CD8-positive, alpha-beta T cell (primary cell): ENCODE measurements at regions of chr1 and their contacts with region 1.

Region 1: GRCh38 chr1:107829061-107830040 is 135.6 kb downstream of the VAV3 start:
- DNase-seq: peak in 2 of 9 experiments; percentile 59 to 72
- ATAC-seq: peak; percentile 76
- H3K4me3 ChIP-seq: no peak overlapping the region
- H3K4me3 Mint-ChIP-seq: peak overlapping the region; percentile 58
- H3K27ac ChIP-seq: peak overlapping the region in 1 of 2 experiments; percentile 56
- H3K27ac Mint-ChIP-seq: peak overlapping the region; percentile 70
- H3K4me1 ChIP-seq: peaks cover 41% of the 10 kb centered on the region
- H3K4me1 Mint-ChIP-seq: peaks cover 56% of the 10 kb centered on the region
- H3K27me3 ChIP-seq: no peaks in the 10 kb centered on the region
- H3K27me3 Mint-ChIP-seq: no peaks in the 10 kb centered on the region
- CTCF ChIP-seq: no peak

Region 2: DNA sequence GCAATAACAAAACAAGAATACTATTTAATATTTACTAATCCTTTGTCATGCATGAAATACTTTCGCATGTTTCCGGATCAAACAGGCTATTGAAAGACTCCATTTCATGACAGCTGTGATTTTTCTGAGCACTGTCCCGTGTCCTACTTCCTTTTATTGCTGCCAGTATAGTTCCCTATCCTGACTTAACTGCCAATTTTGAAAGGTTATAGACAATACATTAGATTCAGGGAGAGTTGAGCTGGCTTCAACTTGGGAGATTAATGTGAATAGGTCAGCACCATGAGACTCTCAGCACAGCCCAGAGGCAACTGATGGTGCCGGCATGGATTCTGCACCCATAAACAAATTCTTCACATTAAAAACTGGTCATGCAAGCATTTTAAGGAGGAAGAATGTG is 90.1 kb before region 1 on chr1:
- CTCF ChIA-PET with region 1: no interaction called
- POLR2A ChIA-PET with region 1: no interaction called
- intact Hi-C with region 1: no loop called
- DNase-seq: peak in 1 of 9 experiments; percentile 4
- ATAC-seq: no peak
- H3K4me3 ChIP-seq: no peak overlapping the region
- H3K4me3 Mint-ChIP-seq: no peak overlapping the region
- H3K27ac ChIP-seq: no peak overlapping the region
- H3K27ac Mint-ChIP-seq: no peak overlapping the region
- H3K4me1 ChIP-seq: no peaks in the 10 kb centered on the region
- H3K4me1 Mint-ChIP-seq: no peaks in the 10 kb centered on the region
- H3K27me3 ChIP-seq: no peaks in the 10 kb centered on the region
- H3K27me3 Mint-ChIP-seq: no peaks in the 10 kb centered on the region
- CTCF ChIP-seq: no peak

Region 3: GRCh38 chr1:107840725-107841124 is 11.4 kb after region 1 on chr1:
- CTCF ChIA-PET with region 1: interaction called, 7 read pairs
- POLR2A ChIA-PET with region 1: interaction called, 11 read pairs
- intact Hi-C with region 1: loop called in 1 of 2 experiments (anchors 1 kb)
- DNase-seq: peak in 2 of 9 experiments; percentile 37 to 63
- ATAC-seq: peak; percentile 50
- H3K4me3 ChIP-seq: peak overlapping the region; percentile 2 to 6
- H3K4me3 Mint-ChIP-seq: peak overlapping the region; percentile 42
- H3K27ac ChIP-seq: peak overlapping the region in 1 of 2 experiments; percentile 73
- H3K27ac Mint-ChIP-seq: peak overlapping the region; percentile 81
- H3K4me1 ChIP-seq: peaks cover 64% of the 10 kb centered on the region
- H3K4me1 Mint-ChIP-seq: peaks cover 87% of the 10 kb centered on the region
- H3K27me3 ChIP-seq: no peaks in the 10 kb centered on the region
- H3K27me3 Mint-ChIP-seq: no peaks in the 10 kb centered on the region
- CTCF ChIP-seq: no peak

Region 4: DNA sequence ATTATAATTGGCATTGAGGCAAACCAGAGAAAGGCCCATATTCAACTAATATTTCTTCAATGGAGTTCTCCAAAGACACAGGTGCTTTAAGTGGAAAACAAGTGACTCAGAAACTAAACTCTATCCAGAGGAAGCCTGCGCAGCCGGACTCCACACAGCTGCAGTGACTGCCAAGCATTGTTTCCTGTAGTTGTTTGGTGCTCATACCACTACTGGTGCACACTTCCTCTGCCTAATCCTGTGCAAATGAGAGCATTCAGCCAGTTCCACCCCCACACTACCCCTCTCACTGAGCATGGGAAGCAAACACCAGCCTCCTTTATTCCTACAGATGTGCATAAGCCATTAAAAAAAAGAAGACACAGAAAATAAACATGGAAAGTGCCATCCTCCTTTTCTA is 32.7 kb after region 1 on chr1:
- CTCF ChIA-PET with region 1: no interaction called
- POLR2A ChIA-PET with region 1: no interaction called
- intact Hi-C with region 1: no loop called
- DNase-seq: no peak
- ATAC-seq: no peak
- H3K4me3 ChIP-seq: no peak overlapping the region
- H3K4me3 Mint-ChIP-seq: no peak overlapping the region
- H3K27ac ChIP-seq: no peak overlapping the region
- H3K27ac Mint-ChIP-seq: peak overlapping the region; percentile 65
- H3K4me1 ChIP-seq: peaks cover 17% of the 10 kb centered on the region
- H3K4me1 Mint-ChIP-seq: peaks cover 36% of the 10 kb centered on the region
- H3K27me3 ChIP-seq: no peaks in the 10 kb centered on the region
- H3K27me3 Mint-ChIP-seq: no peaks in the 10 kb centered on the region
- CTCF ChIP-seq: no peak

Region 5: GRCh38 chr1:108079440-108080025 is 250.2 kb after region 1 on chr1:
- CTCF ChIA-PET with region 1: no interaction called
- POLR2A ChIA-PET with region 1: no interaction called
- intact Hi-C with region 1: loop called in 1 of 2 experiments (anchors 5 kb)
- DNase-seq: peak; percentile 6 to 79 (median 52)
- ATAC-seq: peak; percentile 67
- H3K4me3 ChIP-seq: no peak overlapping the region
- H3K4me3 Mint-ChIP-seq: peak overlapping the region; percentile 47
- H3K27ac ChIP-seq: peak overlapping the region; percentile 41 to 62
- H3K27ac Mint-ChIP-seq: peak overlapping the region; percentile 89
- H3K4me1 ChIP-seq: peaks cover 74% of the 10 kb centered on the region
- H3K4me1 Mint-ChIP-seq: peaks cover 79% of the 10 kb centered on the region
- H3K27me3 ChIP-seq: no peaks in the 10 kb centered on the region
- H3K27me3 Mint-ChIP-seq: no peaks in the 10 kb centered on the region
- CTCF ChIP-seq: no peak